Endothelial cell of umbilical vein (primary cell): ENCODE measurements at regions of chr2 and their contacts with region 1.

Region 1: GRCh38 chr2:225502971-225503370 is 103.5 kb downstream of the NYAP2 start:
- DNase-seq: no peak
- H3K4me3 ChIP-seq: no peak overlapping the region
- H3K27ac ChIP-seq: no peak overlapping the region
- H3K4me1 ChIP-seq: no peaks in the 10 kb centered on the region
- H3K27me3 ChIP-seq: no peaks in the 10 kb centered on the region
- CTCF ChIP-seq: no peak
- POLR2A ChIP-seq: no peak

Region 2: DNA sequence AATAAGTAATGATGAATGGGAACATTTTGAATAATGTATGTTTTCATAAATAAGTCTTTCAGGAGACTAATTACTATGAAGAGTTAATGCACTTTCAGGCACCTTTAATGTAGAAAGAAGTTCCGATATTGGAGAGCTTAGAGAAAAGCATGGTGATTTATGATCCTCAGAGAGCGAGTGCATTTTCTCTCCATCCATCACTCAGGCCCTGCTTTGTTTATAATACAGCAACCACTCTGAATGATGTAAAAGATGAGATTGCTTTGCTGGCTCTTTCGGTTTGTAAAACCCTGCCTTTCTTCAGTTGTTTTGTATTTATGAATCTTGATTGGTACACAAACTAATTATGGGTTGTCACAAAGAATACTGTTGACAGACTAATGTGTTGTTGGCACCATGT is 28.6 kb after region 1 on chr2:
- CTCF ChIA-PET with region 1: no interaction called
- POLR2A ChIA-PET with region 1: no interaction called
- dilution Hi-C with region 1: no loop called
- intact Hi-C with region 1: no loop called
- DNase-seq: no peak
- H3K4me3 ChIP-seq: no peak overlapping the region
- H3K27ac ChIP-seq: no peak overlapping the region
- H3K4me1 ChIP-seq: no peaks in the 10 kb centered on the region
- H3K27me3 ChIP-seq: no peaks in the 10 kb centered on the region
- CTCF ChIP-seq: no peak
- POLR2A ChIP-seq: no peak

Region 3: DNA sequence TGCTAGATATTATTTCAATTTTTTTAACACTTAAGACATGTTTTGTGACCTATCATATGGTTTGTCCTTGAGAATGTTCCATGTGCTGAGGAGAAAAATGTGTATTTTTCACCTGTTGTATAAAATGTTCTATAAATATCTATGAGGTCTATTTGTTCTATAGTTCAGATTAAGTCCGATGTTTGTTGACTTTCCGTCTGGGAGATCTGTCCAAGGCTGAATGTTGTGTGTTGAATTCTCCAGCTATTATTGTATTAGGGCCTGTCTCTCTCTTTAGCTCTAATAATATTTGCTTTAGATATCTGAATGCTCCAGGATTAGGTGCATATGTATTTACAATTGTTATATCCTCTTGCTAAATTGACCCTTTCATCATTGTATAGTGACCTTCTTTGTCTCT is 40.7 kb after region 1 on chr2:
- CTCF ChIA-PET with region 1: no interaction called
- POLR2A ChIA-PET with region 1: no interaction called
- dilution Hi-C with region 1: no loop called
- intact Hi-C with region 1: loop called (anchors 1 kb)
- DNase-seq: no peak
- H3K4me3 ChIP-seq: no peak overlapping the region
- H3K27ac ChIP-seq: no peak overlapping the region
- H3K4me1 ChIP-seq: no peaks in the 10 kb centered on the region
- H3K27me3 ChIP-seq: no peaks in the 10 kb centered on the region
- CTCF ChIP-seq: no peak
- POLR2A ChIP-seq: no peak